Naive thymus-derived CD4-positive, alpha-beta T cell (primary cell): ENCODE measurements at regions of chr16 and their contacts with region 1.

Region 1: GRCh38 chr16:67806428-67807147 is at the starts of genes RANBP10 and TSNAXIP1:
- DNase-seq: peak; percentile 91 to 99 (median 97)
- ATAC-seq: peak; percentile 96
- H3K4me3 ChIP-seq: peak within 1 kb of the TSS; percentile 88
- H3K4me3 Mint-ChIP-seq: peak within 1 kb of the TSS; percentile 75 to 97 (median 94)
- H3K27ac ChIP-seq: peak within 1 kb of the TSS; percentile 89
- H3K27ac Mint-ChIP-seq: peak within 1 kb of the TSS; percentile 74 to 97 (median 95)
- H3K4me1 ChIP-seq: peaks cover 29 to 43% of the 10 kb centered on the region in 2 donors
- H3K4me1 Mint-ChIP-seq: peaks cover 13 to 49% (median 42%) of the 10 kb centered on the region in 7 donors
- H3K27me3 ChIP-seq: no peaks in the 10 kb centered on the region
- H3K27me3 Mint-ChIP-seq: peaks cover 0 to under 1% (median 0%) of the 10 kb centered on the region in 5 donors
- total RNA-seq, gene RANBP10: 22.3 to 26.6 (median 24.7) TPM
- total RNA-seq, gene TSNAXIP1: 0.24 to 1.1 (median 0.54) TPM

Region 2: DNA sequence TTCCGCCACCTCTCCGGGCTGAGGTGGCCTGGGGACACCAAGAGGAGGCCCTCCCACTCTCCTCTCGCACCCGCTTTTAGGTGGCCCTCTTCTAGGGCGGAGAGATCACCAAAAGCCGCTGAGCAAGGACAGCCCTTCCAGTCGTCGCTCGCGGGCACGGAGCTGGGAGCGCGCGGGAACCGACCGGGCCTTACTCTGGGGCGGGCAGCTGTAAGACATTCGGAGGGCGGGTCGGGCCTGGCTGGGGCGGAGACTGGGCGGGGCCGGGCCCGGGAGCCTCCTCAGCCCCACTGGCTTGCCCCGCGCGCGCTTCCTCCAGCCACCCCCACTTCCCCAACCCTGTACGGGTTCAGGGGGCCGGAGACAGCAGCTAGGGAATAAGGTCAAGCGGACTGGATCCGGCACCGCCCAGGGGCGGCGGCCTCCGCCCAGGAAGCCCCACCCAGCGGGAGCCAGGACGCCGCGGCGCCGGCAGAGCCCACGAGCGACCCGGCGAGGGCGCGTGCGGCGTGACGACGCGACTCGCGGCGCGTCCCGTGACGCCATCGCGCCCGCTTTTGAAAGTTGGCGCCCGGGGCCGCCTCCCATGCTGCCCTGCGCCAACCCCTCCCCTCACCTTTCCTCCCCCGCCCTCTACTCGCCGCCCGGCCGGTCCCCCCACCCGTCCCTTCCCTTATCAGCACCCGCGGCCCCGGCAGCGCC is 244.6 kb before region 1 on chr16:
- CTCF ChIA-PET with region 1: no interaction called
- POLR2A ChIA-PET with region 1: interaction called, 7 read pairs
- intact Hi-C with region 1: loop called (anchors 1 kb)
- DNase-seq: peak; percentile 93 to 98 (median 96)
- ATAC-seq: peak; percentile 86
- H3K4me3 ChIP-seq: peak overlapping the region; percentile 72
- H3K4me3 Mint-ChIP-seq: peak overlapping the region; percentile 85 to 93 (median 90)
- H3K27ac ChIP-seq: peak overlapping the region; percentile 98
- H3K27ac Mint-ChIP-seq: peak overlapping the region; percentile 90 to 99 (median 96)
- H3K4me1 ChIP-seq: peaks cover 30 to 36% of the 10 kb centered on the region in 2 donors
- H3K4me1 Mint-ChIP-seq: peaks cover 28 to 64% (median 46%) of the 10 kb centered on the region in 7 donors
- H3K27me3 ChIP-seq: no peaks in the 10 kb centered on the region
- H3K27me3 Mint-ChIP-seq: no peaks in the 10 kb centered on the region

Region 3: GRCh38 chr16:67672739-67673662 is 133.6 kb before region 1 on chr16:
- CTCF ChIA-PET with region 1: no interaction called
- POLR2A ChIA-PET with region 1: no interaction called
- intact Hi-C with region 1: loop called in 1 of 2 experiments (anchors 1 kb)
- DNase-seq: peak in 5 of 9 donors; percentile 36 to 59 (median 45)
- ATAC-seq: peak; percentile 42
- H3K4me3 ChIP-seq: no peak overlapping the region
- H3K4me3 Mint-ChIP-seq: no peak overlapping the region
- H3K27ac ChIP-seq: no peak overlapping the region
- H3K27ac Mint-ChIP-seq: peak overlapping the region in 4 of 9 donors; percentile 41 to 62 (median 51)
- H3K4me1 ChIP-seq: peaks cover 0 to 2% of the 10 kb centered on the region in 2 donors
- H3K4me1 Mint-ChIP-seq: peaks cover 1 to 14% (median 2%) of the 10 kb centered on the region in 7 donors
- H3K27me3 ChIP-seq: no peaks in the 10 kb centered on the region
- H3K27me3 Mint-ChIP-seq: no peaks in the 10 kb centered on the region

Region 4: DNA sequence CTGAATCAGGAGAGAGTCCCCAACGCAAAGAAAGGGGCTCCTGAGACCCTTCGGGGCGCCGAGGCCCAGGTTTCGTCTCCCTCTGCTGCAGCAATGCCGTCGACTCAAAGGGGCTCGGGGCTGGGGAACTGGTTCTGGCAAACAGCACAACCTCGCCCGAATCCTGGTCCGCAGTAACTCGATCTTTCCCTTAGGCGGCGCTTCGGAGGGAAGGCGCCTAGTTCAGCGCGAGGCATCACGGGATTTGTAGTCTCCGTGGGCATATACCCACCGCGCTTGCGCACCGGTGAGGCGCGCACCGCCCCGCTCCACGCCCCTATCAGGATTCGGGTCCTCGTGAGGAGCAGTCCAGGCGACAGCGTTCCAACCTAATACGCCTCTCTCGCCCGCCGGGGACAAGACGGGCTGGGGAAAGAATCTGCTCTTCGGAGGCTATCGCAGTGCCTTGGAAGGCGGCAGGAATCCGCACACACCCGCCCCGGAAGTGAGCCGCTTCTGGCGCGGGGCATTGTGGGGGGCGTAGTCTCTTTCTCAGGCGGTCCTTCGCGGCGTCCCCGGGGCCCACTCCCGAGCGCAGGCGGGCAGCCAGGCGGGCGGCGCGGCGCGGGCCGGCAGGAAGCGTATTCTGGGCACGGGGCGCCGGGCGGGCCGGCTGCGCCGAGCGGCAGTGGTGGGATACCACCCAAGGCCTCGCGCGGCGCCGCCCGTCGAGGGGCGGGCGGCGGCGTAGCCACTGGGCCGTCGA is 35.3 kb after region 1 on chr16 and contains the start of gene THAP11:
- CTCF ChIA-PET with region 1: no interaction called
- POLR2A ChIA-PET with region 1: interaction called, 13 read pairs
- intact Hi-C with region 1: loop called (anchors 1 kb)
- DNase-seq: peak; percentile 91 to 99 (median 96)
- ATAC-seq: peak; percentile 76
- H3K4me3 ChIP-seq: peak within 1 kb of the TSS; percentile 100
- H3K4me3 Mint-ChIP-seq: peak within 1 kb of the TSS; percentile 94 to 97 (median 96)
- H3K27ac ChIP-seq: peak within 1 kb of the TSS; percentile 99
- H3K27ac Mint-ChIP-seq: peak within 1 kb of the TSS; percentile 94 to 98 (median 97)
- H3K4me1 ChIP-seq: peaks cover 34 to 36% of the 10 kb centered on the region in 2 donors
- H3K4me1 Mint-ChIP-seq: peaks cover 18 to 41% (median 36%) of the 10 kb centered on the region in 7 donors
- H3K27me3 ChIP-seq: no peaks in the 10 kb centered on the region
- H3K27me3 Mint-ChIP-seq: no peaks in the 10 kb centered on the region
- total RNA-seq, gene THAP11: 29.0 to 62.7 (median 44.6) TPM

Region 5: DNA sequence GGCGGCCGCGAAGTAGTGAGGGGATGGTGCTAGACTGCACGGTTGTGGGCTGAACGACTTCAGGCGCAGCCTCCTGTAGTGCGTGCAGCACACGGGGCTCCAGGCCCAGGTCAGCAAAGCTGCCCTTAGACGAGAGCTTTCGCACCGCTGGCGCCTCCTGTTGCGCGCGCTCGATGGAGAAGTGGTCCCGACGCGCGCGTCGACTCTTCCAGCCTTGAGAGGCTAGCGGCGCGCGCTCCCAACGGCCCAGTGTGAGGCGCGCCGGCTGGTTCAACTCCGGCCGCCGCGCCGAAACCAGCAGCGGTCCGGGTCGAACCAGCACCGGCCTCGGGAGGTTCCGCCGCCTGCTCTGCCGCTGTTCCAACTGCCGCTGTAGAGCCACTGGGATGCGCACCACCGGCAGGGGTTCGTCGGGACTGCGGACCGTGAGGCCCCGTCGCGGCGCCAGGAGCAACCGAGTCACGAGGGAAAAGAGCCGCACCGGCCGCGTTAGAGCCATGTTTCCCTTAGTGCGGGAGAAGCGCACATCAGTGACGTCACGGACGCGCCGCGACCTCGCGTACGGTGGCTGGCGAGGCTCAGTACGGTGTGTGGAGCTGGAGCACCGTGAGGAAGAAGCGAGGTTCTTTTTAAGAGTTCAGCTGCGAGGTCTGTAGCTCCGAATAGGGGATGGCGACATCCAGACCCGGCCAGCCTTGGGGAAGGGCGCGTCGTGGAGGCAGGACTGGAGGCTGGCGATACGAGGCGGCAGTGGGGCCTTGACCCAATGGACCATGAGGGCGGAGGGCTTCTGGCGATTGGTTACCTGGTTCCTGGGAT is 216.3 kb after region 1 on chr16 and contains the starts of genes DDX28 and DUS2:
- CTCF ChIA-PET with region 1: no interaction called
- POLR2A ChIA-PET with region 1: no interaction called
- intact Hi-C with region 1: loop called in 1 of 2 experiments (anchors 1 kb)
- DNase-seq: peak; percentile 89 to 98 (median 94)
- ATAC-seq: peak; percentile 98
- H3K4me3 ChIP-seq: peak within 1 kb of the TSS; percentile 67
- H3K4me3 Mint-ChIP-seq: peak within 1 kb of the TSS; percentile 88 to 100 (median 98)
- H3K27ac ChIP-seq: peak within 1 kb of the TSS; percentile 92
- H3K27ac Mint-ChIP-seq: peak within 1 kb of the TSS; percentile 94 to 100 (median 96)
- H3K4me1 ChIP-seq: peaks cover 16 to 22% of the 10 kb centered on the region in 2 donors
- H3K4me1 Mint-ChIP-seq: peaks cover 13 to 42% (median 30%) of the 10 kb centered on the region in 7 donors
- H3K27me3 ChIP-seq: no peaks in the 10 kb centered on the region
- H3K27me3 Mint-ChIP-seq: peaks cover 0 to 2% (median 0%) of the 10 kb centered on the region in 5 donors
- total RNA-seq, gene DDX28: 15.5 to 19.9 (median 19.1) TPM
- total RNA-seq, gene DUS2: 13.6 to 25.9 (median 18.3) TPM

Region 6: DNA sequence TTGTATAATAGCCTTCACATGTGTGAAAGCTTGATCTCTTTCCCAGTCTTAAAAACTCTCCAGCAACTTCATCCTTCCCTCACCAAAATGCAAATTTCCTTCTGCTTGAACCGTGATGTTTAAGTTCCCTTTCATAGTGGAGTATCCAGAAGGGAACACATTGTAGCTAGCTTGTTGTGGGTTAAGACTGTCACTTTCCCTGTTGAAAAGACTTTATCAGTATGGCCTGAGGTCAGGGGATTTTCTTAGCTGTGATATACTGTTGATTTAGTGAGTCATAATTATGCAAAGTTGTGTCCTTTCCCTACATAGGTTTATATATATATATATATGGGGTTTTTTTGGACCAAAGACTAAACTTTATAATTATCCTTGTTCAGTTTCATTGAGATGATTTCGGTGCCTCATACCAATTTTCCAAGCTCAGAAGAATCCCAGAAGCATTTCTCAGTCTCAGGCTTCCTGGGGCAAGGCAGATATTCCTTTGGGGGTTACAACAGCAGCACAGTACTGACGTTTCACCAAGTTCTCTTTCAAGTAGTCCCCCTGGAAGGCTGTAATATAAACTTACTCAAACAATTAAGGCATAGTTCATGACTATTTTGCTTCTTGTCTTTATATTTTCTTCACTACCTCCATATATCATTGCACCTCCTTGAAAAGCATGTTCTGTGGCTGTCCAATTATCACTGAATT is 393.6 kb after region 1 on chr16:
- CTCF ChIA-PET with region 1: no interaction called
- POLR2A ChIA-PET with region 1: no interaction called
- intact Hi-C with region 1: no loop called
- DNase-seq: no peak
- ATAC-seq: no peak
- H3K4me3 ChIP-seq: no peak overlapping the region
- H3K4me3 Mint-ChIP-seq: no peak overlapping the region
- H3K27ac ChIP-seq: no peak overlapping the region
- H3K27ac Mint-ChIP-seq: peak overlapping the region in 8 of 9 donors; percentile 7 to 78 (median 24)
- H3K4me1 ChIP-seq: no peaks in the 10 kb centered on the region
- H3K4me1 Mint-ChIP-seq: peaks cover 4 to 42% (median 20%) of the 10 kb centered on the region in 7 donors
- H3K27me3 ChIP-seq: no peaks in the 10 kb centered on the region
- H3K27me3 Mint-ChIP-seq: no peaks in the 10 kb centered on the region

Region 7: DNA sequence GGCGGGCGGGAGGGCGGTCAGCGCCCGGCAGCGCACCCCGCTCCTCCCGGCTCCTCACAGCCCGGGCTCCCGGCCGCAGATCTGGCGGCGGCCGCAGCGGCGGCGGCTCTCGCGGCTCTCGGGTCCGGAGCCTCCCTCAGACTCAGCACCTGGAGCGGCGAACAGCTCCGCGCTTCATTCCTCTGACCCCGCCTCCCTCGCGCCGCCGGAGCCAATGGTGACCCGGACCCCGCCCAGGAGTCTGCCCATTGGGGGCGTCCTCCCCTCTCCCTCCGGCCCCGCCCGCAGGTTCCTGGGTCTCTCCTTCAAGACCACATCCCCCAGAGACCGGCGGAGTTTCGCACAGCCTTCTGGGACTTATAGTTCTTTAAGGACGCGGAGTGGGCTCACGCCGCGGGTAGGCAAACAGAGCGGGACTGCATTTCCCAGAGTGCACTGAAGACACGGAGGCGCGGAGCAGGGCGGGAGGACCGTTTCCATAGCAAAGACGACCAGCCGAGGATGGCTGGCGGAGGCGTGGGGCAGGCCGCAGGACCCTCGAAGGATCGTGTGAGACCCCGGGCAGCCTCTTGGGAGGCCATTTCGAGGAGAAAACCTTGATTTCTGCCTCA is 641.9 kb after region 1 on chr16 and contains the start of gene SMPD3:
- CTCF ChIA-PET with region 1: no interaction called
- POLR2A ChIA-PET with region 1: no interaction called
- intact Hi-C with region 1: loop called (anchors 10 kb)
- DNase-seq: peak; percentile 95 to 99 (median 97)
- ATAC-seq: peak; percentile 99
- H3K4me3 ChIP-seq: peak within 1 kb of the TSS; percentile 63
- H3K4me3 Mint-ChIP-seq: peak within 1 kb of the TSS; percentile 74 to 93 (median 76)
- H3K27ac ChIP-seq: no peak within 1 kb of the TSS
- H3K27ac Mint-ChIP-seq: peak within 1 kb of the TSS in 8 of 9 donors; percentile 2 to 80 (median 38)
- H3K4me1 ChIP-seq: peaks cover 21 to 28% of the 10 kb centered on the region in 2 donors
- H3K4me1 Mint-ChIP-seq: peaks cover 16 to 27% (median 22%) of the 10 kb centered on the region in 7 donors
- H3K27me3 ChIP-seq: peaks cover 14% of the 10 kb centered on the region in 2 donors
- H3K27me3 Mint-ChIP-seq: peaks cover 12 to 56% (median 23%) of the 10 kb centered on the region in 5 donors
- total RNA-seq, gene SMPD3: 0.57 to 6.1 (median 1.8) TPM